ENCODE measurements at regions of chr6 and their contacts with region 1.

Region 1: GRCh38 chr6:11144393-11144851 is 32.9 kb upstream of the ERVFRD-1 start:
- DNase-seq: peak; percentile 73 to 85
- H3K4me3 ChIP-seq: no peak overlapping the region
- H3K27ac ChIP-seq: no peak overlapping the region
- H3K4me1 ChIP-seq: peaks cover 0 to 3% (median 0%) of the 10 kb centered on the region in 4 donors
- H3K27me3 ChIP-seq: no peaks in the 10 kb centered on the region
- CTCF ChIP-seq: peak; percentile 88 to 91

Region 2: DNA sequence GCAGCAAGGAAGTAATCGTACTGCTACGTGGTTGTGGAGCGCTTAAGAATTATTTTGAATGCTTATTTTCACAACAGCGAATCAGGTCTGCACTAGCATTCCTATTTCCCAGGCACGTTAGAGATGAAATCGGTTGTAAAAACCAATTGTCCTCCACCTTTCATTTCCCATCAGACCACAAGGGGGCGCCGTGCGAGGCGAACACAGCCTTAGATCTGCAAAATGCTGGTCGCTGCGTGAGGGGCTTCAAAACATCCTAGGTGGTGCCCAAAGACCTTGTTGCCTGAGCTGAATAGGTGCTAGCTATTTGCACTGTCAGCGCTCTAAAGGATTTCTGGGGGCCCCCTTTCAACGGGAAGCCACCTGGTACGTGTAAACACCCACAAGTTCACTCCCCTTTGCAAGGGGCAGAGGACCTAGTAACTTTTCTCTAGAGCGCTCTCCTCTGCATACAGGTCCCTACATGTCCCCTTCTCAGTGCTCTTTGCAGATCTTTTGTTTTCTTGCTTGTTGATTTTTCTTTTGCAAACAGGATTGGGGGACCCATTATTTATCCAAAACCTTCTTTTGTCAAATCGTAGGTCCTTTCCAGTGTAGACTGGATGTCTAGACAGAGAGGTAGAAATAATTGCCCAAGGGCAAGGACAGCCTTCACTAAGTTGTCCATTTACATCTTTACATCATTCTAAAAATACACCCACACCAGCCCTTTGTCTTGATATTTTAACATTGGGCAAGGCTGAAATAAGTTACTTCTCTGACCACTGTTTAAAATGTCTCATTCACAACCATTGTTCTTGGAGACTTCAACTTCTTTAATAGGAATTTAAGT is 28.3 kb after region 1 on chr6:
- intact Hi-C with region 1: loop called (anchors 2 kb)
- DNase-seq: peak; percentile 54 to 77
- H3K4me3 ChIP-seq: no peak overlapping the region
- H3K27ac ChIP-seq: no peak overlapping the region
- H3K4me1 ChIP-seq: peaks cover 0 to 7% (median 0%) of the 10 kb centered on the region in 4 donors
- H3K27me3 ChIP-seq: no peaks in the 10 kb centered on the region
- CTCF ChIP-seq: peak; percentile 84 to 86

Region 3: DNA sequence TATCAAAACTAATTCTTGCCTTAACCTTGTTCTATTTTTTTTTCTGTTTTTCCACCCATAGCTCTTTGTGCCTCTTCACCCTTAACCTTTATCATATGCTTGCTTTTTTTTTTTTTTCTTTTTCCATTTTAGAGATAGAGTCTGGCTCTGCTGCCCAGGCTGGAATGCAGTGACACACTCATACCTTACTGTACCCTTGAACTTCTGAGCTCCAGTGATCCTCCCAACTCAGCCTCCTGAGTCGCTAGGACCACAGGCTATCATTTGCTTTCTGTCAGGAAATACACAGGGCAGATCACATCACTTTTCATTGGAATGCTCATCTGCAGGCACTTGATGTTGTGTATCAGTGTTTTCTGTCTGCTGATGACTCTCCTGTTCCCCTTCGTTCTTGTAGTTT is 426.7 kb after region 1 on chr6:
- intact Hi-C with region 1: loop called (anchors 5 kb)
- DNase-seq: no peak
- H3K4me3 ChIP-seq: no peak overlapping the region
- H3K27ac ChIP-seq: no peak overlapping the region
- H3K4me1 ChIP-seq: no peaks in the 10 kb centered on the region
- H3K27me3 ChIP-seq: no peaks in the 10 kb centered on the region
- CTCF ChIP-seq: no peak